ENCODE measurements at regions of chr2 and their contacts with region 1.

Region 1: GRCh38 chr2:3461801-3462492 is 57.4 kb downstream of the ADI1 start:
- DNase-seq: no peak
- H3K4me3 ChIP-seq: no peak overlapping the region; a peak in 1 of 8 replicates
- H3K27ac ChIP-seq: no peak overlapping the region
- H3K4me1 ChIP-seq: peaks cover 5 to 10% (median 9%) of the 10 kb centered on the region in 4 experiments
- H3K27me3 ChIP-seq: no peaks in the 10 kb centered on the region
- CTCF ChIP-seq: peak; percentile 4 to 74 (median 45)
- EP300 ChIP-seq: no peak
- POLR2A ChIP-seq: no peak
- RAD21 ChIP-seq: peak; percentile 51 to 54

Region 2: DNA sequence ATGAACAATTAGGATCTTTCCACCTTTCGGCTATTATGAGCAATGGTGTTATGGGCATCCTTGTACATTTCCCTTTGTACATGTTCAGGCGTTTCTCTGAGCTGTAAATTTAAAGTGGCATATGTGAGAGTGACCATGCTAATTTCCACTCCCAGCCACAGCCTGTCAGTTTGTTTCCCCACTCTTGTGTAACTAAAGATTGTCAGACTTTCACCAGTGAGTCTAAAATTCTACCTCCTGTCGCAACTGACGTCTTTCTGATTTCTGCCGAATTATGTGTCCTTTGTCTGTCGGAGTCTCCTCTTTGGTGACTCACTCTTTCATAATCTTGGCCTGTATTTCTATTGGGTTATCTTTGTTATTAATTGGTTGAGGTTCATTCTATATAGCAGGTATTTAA is 31.8 kb before region 1 on chr2:
- CTCF ChIA-PET with region 1: interaction called, 123 read pairs
- POLR2A ChIA-PET with region 1: no interaction called
- DNase-seq: no peak
- H3K4me3 ChIP-seq: no peak overlapping the region
- H3K27ac ChIP-seq: no peak overlapping the region
- H3K4me1 ChIP-seq: peaks cover 0 to 4% (median under 1%) of the 10 kb centered on the region in 4 experiments; a peak in 2 of 7 replicates
- H3K27me3 ChIP-seq: no peaks in the 10 kb centered on the region
- CTCF ChIP-seq: no peak
- EP300 ChIP-seq: no peak
- POLR2A ChIP-seq: no peak
- RAD21 ChIP-seq: no peak

Region 3: GRCh38 chr2:3449086-3449485 is 12.9 kb before region 1 on chr2:
- CTCF ChIA-PET with region 1: interaction called, 51 read pairs
- POLR2A ChIA-PET with region 1: interaction called, 3 read pairs
- DNase-seq: peak in 1 of 2 experiments; percentile 20
- H3K4me3 ChIP-seq: no peak overlapping the region
- H3K27ac ChIP-seq: no peak overlapping the region
- H3K4me1 ChIP-seq: peaks cover 0 to 3% (median 0%) of the 10 kb centered on the region in 4 experiments; a peak in 1 of 7 replicates
- H3K27me3 ChIP-seq: no peaks in the 10 kb centered on the region
- CTCF ChIP-seq: no peak
- EP300 ChIP-seq: no peak
- POLR2A ChIP-seq: no peak
- RAD21 ChIP-seq: no peak

Region 4: DNA sequence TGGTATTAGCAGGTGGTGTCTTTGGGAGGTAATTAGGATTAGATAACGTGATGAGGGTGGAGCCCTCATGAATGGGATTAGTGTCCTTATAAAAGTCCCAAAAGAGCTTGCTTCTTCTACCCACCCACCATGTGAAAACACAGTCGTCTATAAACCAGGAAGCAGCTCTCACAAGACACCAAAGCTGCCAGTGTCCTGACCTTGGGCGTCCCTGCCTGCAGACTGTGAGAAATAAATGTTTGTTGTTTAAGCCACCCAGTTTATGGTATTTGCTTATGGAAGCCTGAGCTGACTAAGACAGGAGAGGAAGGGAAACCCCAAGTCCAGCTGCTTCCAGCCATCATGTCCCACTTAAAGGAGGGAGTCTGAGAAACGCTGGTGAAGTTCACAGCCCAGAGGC is 43.8 kb after region 1 on chr2:
- CTCF ChIA-PET with region 1: interaction called, 14 read pairs
- POLR2A ChIA-PET with region 1: no interaction called
- DNase-seq: no peak
- H3K4me3 ChIP-seq: no peak overlapping the region
- H3K27ac ChIP-seq: no peak overlapping the region
- H3K4me1 ChIP-seq: no peaks in the 10 kb centered on the region
- H3K27me3 ChIP-seq: no peaks in the 10 kb centered on the region
- CTCF ChIP-seq: no peak
- EP300 ChIP-seq: no peak
- POLR2A ChIP-seq: no peak
- RAD21 ChIP-seq: no peak

Region 5: DNA sequence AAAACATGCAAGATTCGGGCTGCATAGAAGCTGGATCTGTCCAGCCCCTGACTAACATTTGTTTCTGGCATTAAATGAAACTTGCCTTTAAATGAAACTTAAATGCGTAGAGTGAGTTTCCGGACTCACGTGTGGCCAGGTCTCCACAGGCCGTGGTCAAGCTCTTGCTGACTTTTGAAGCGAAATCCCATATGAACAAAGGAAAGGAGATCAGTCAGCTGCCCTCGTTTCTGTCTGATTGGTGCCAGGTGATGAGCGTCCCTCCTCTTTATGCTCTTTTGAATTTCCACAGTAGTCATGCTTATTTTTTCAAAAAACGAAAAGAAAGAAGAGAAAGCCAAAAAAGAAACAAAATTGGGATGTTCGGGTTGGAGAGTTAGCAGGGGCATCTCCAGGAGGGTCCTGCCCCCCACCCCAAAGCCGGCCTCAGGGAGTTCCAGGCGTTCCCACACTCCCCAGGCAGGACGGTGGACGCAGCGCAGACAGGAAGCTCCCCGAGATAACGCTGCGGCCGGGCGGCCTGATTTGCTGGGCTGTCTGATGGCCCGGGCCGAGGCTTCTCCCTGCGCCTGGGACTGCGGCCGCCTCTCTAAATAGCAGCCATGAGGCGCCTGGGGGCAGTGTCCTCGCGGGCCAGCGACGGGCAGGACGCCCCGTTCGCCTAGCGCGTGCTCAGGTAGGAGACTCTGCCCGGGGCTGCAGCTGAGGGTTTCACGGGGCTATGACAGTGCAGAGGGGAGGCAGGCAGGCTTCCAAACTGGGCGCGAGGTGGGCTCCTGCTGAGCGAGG is 132.7 kb after region 1 on chr2 and contains the start of gene COLEC11:
- CTCF ChIA-PET with region 1: no interaction called
- POLR2A ChIA-PET with region 1: no interaction called
- DNase-seq: peak in 1 of 2 experiments; percentile 62
- H3K4me3 ChIP-seq: no peak within 1 kb of the TSS
- H3K27ac ChIP-seq: no peak within 1 kb of the TSS
- H3K4me1 ChIP-seq: no peaks in the 10 kb centered on the region
- H3K27me3 ChIP-seq: no peaks in the 10 kb centered on the region
- CTCF ChIP-seq: peak; percentile 19 to 37 (median 23); a peak in 2 of 4 replicates
- EP300 ChIP-seq: no peak
- POLR2A ChIP-seq: no peak
- RAD21 ChIP-seq: peak; percentile 36 to 47; a peak in 3 of 4 replicates
- total RNA-seq, gene COLEC11: 0.25 and 0.47 TPM in 2 replicates

Measured in H1 (cell line).